HepG2 (cell line): ENCODE measurements at regions of chr18 and their contacts with region 1.

Region 1: GRCh38 chr18:78525366-78526111 is 454.1 kb upstream of the SALL3 start:
- DNase-seq: no peak
- ATAC-seq: no peak
- H3K4me3 ChIP-seq: no peak overlapping the region
- H3K27ac ChIP-seq: no peak overlapping the region
- H3K4me1 ChIP-seq: no peaks in the 10 kb centered on the region
- H3K27me3 ChIP-seq: peaks cover 3 to 39% of the 10 kb centered on the region in 2 experiments
- CTCF ChIP-seq: no peak
- EP300 ChIP-seq: no peak
- POLR2A ChIP-seq: no peak
- RAD21 ChIP-seq: no peak

Region 2: GRCh38 chr18:77833807-77834206 is 691.7 kb before region 1 on chr18:
- CTCF ChIA-PET with region 1: no interaction called
- POLR2A ChIA-PET with region 1: no interaction called
- in situ Hi-C with region 1: no loop called
- intact Hi-C with region 1: loop called (anchors 5 kb)
- DNase-seq: no peak
- ATAC-seq: no peak
- H3K4me3 ChIP-seq: no peak overlapping the region
- H3K27ac ChIP-seq: no peak overlapping the region
- H3K4me1 ChIP-seq: no peaks in the 10 kb centered on the region
- H3K27me3 ChIP-seq: peaks cover 0 to 3% of the 10 kb centered on the region in 2 experiments; a peak in 2 of 5 replicates
- CTCF ChIP-seq: no peak
- EP300 ChIP-seq: no peak
- POLR2A ChIP-seq: no peak
- RAD21 ChIP-seq: no peak